ENCODE measurements at regions of chr10 and their contacts with region 1.

Region 1: GRCh38 chr10:43348511-43349312 is 22.7 kb upstream of the FXYD4 start:
- DNase-seq: peak; percentile 84 to 87 (median 85)
- ATAC-seq: peak; percentile 99 to 100 (median 100)
- H3K4me3 ChIP-seq: no peak overlapping the region
- H3K27ac ChIP-seq: no peak overlapping the region
- H3K4me1 ChIP-seq: no peaks in the 10 kb centered on the region
- H3K27me3 ChIP-seq: no peaks in the 10 kb centered on the region
- CTCF ChIP-seq: peak; percentile 93 to 95 (median 95)
- POLR2A ChIP-seq: no peak

Region 2: GRCh38 chr10:43292755-43293676 is 55.7 kb before region 1 on chr10:
- intact Hi-C with region 1: loop called (anchors 5 to 10 kb)
- DNase-seq: peak in 2 of 3 donors; percentile 52 to 62
- ATAC-seq: peak; percentile 92 to 98 (median 94)
- H3K4me3 ChIP-seq: no peak overlapping the region
- H3K27ac ChIP-seq: no peak overlapping the region
- H3K4me1 ChIP-seq: no peaks in the 10 kb centered on the region
- H3K27me3 ChIP-seq: no peaks in the 10 kb centered on the region
- CTCF ChIP-seq: peak; percentile 71 to 80 (median 74)
- POLR2A ChIP-seq: no peak

Region 3: GRCh38 chr10:43299579-43299978 is 49.1 kb before region 1 on chr10:
- intact Hi-C with region 1: loop called (anchors 5 to 10 kb)
- DNase-seq: no peak
- ATAC-seq: no peak
- H3K4me3 ChIP-seq: no peak overlapping the region
- H3K27ac ChIP-seq: no peak overlapping the region
- H3K4me1 ChIP-seq: peaks cover 0 to 5% (median 0%) of the 10 kb centered on the region in 4 donors
- H3K27me3 ChIP-seq: no peaks in the 10 kb centered on the region
- CTCF ChIP-seq: no peak
- POLR2A ChIP-seq: no peak